ENCODE measurements at regions of chr11 and their contacts with region 1.

Region 1: DNA sequence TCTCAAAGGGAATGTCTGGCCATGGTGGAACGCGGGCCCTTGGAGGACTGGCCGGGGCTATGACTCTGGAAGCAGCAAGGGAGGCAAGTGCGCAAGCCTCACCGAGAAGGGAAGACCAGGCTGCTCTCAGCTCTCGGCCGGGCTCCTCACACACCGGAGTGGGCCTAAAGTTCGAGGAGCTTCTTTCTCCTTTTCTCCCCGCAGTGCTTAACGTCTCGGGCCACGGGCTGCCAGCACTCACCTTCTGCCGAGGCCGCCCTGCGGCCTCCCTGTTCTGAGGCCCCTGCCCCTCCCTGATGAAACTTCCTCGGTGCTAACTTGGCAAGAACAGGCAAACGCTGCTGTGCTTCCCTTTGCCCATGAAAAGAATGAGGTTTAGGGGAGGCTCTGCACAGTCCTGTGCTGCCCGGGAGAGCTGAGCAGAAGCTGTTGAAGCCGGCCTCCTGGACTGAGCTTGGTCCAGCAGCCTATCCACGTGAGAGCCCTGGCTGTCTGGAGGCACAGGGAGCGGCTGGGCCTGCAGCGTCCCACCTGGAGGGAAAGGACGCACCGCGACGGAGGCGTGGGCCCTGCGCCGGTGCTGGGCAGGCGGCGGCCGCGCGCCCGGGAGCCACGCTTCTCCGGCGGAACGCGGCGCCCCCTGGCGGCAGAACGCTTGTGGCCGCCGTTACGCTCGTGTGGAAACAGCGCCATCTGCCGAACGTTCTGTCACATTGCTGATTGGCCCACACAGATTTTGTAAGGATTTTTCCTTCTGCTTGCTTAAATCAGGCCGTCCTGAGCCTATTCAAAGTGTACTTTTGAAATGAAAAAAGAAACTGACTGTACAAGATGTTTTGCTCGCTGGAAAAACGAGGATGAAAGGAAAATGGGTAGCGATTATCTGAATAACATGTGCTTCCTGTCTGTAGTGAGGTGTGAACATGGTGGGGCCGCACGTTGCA is 65.0 kb upstream of the TMEM45B start:
- H3K4me3 ChIP-seq: no peak overlapping the region
- H3K27ac ChIP-seq: no peak overlapping the region
- H3K4me1 ChIP-seq: no peaks in the 10 kb centered on the region
- CTCF ChIP-seq: peak; percentile 42; the same call in 1 of the 2 replicates

Region 2: DNA sequence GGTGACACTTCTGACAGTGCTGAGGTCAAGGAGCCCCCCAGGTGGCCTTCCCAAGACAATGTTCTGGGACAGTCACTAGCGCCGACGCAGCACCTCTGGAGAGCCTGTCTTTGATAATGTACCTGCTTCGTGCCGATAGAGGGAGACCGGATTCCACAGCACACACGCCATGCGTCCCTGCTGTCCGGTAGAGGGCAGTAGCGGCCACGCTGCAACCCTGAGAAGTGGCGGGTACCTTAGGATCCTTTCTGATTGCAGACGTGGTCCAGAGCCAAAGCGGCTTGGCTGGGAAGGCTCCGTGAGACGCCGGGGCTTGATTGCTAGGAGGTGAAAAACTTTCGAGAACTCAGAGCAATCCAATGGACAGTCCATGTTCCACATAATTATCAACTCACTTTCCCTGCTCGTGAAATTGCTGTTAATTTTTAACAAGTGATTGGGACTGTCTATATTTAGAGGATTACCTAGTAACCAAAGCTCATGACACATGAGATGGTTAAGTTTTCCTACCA is 386.4 kb before region 1 on chr11:
- CTCF ChIA-PET with region 1: interaction called, 44 read pairs
- POLR2A ChIA-PET with region 1: no interaction called
- H3K4me3 ChIP-seq: no peak overlapping the region
- H3K27ac ChIP-seq: no peak overlapping the region
- H3K4me1 ChIP-seq: peaks cover 8% of the 10 kb centered on the region; the same call in 1 of the 2 replicates
- CTCF ChIP-seq: peak; percentile 98

Region 3: DNA sequence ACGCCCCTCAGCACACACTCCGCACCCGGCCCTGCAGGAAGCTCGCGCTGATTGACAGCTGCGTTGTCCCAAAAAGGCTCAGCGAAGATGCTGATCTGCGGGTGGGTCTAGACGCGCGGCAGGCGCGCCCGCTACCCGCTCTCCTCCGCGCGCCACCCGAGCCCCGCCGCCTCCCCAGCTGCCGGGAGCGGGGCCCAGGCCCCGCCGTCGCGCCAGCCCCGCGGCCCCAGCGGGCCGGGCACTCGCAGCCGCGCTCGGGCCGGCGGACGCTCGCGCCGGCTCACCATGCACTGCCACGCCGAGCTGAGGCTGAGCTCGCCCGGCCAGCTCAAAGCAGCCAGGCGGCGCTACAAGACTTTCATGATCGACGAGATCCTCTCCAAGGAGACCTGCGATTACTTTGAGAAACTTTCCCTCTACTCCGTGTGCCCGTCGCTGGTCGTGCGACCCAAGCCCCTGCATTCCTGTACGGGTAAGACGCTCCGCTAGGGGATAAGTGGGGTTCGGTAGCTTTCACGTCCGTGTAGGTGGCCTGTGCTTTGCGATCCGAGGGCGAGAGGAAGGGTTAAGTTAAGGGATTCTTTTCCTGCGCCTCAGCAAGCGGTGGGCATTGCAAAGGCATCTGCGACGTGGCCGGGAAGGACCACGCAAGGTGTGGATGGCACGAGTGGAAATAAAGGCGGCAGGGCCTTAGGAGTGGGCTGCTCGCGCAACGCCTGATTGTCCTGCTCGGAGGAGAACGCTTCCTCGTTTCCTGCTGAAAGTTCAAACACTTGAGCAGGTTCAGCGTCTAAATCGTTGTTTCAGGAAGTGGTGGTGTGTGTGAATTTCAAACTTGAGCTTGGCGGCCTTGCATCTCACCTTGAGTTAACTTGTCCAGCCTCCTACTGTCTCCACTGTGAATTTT is 374.6 kb before region 1 on chr11 and contains the start of gene BARX2:
- CTCF ChIA-PET with region 1: interaction called, 36 read pairs
- POLR2A ChIA-PET with region 1: interaction called, 3 read pairs
- H3K4me3 ChIP-seq: peak within 1 kb of the TSS; percentile 55
- H3K27ac ChIP-seq: peak within 1 kb of the TSS; percentile 93
- H3K4me1 ChIP-seq: peaks cover 8% of the 10 kb centered on the region
- CTCF ChIP-seq: peak; percentile 75

Region 4: GRCh38 chr11:129695575-129696308 is 54.9 kb before region 1 on chr11:
- CTCF ChIA-PET with region 1: interaction called, 10 read pairs
- POLR2A ChIA-PET with region 1: no interaction called
- H3K4me3 ChIP-seq: no peak overlapping the region
- H3K27ac ChIP-seq: no peak overlapping the region
- H3K4me1 ChIP-seq: no peaks in the 10 kb centered on the region
- CTCF ChIP-seq: peak; percentile 30; the same call in 1 of the 2 replicates

Region 5: DNA sequence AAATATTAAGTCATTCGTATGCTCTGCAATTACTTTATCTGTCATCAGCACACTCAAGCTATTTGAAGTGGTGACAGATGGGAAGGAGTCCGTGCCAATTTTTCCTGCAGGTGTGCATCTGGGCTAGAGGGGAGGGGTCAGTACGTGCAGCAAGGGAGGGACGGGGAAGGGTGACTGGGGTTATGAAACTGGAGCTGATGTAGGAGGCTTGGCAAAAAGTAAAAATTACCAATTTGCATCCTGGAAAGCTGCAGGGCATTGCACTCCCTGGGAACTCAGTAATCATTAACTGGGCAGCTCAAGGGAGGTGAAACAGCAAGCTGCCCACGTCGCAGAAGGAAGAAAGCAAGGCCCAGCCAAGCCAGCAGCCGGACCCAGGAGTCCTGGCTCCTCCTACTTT is 22.0 kb before region 1 on chr11:
- CTCF ChIA-PET with region 1: interaction called, 10 read pairs
- POLR2A ChIA-PET with region 1: no interaction called
- H3K4me3 ChIP-seq: no peak overlapping the region
- H3K27ac ChIP-seq: no peak overlapping the region
- H3K4me1 ChIP-seq: no peaks in the 10 kb centered on the region
- CTCF ChIP-seq: no peak

Region 6: DNA sequence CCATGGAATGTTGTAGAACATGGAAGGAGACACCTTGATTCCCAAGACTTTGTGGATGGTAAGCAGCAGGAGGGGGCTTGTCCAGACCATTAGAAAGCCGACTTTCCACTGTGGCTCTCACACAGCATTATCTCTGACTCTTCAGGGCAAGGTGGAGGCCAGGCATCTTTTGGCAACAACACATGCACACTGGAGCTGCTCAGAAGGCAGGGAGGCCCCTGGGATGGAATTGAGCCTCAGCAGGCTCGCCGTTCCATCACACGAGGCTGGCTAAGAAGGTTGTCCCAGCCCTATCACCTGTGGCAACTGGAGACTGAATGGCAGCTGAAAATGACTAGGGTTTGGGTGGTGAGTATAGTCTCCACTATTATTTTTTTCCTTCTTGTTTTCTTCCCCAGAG is 11.3 kb before region 1 on chr11:
- CTCF ChIA-PET with region 1: interaction called, 17 read pairs
- POLR2A ChIA-PET with region 1: no interaction called
- H3K4me3 ChIP-seq: no peak overlapping the region
- H3K27ac ChIP-seq: no peak overlapping the region
- H3K4me1 ChIP-seq: no peaks in the 10 kb centered on the region
- CTCF ChIP-seq: no peak

Measured in HEK293 (cell line).